CD8-positive, alpha-beta T cell (primary cell): ENCODE measurements at regions of chr10 and their contacts with region 1.

Region 1: GRCh38 chr10:32190890-32191491 is 134.8 kb upstream of the KIF5B start:
- DNase-seq: peak in 2 of 9 experiments; percentile 52 to 65
- ATAC-seq: peak; percentile 51
- H3K4me3 ChIP-seq: no peak overlapping the region
- H3K4me3 Mint-ChIP-seq: no peak overlapping the region
- H3K27ac ChIP-seq: no peak overlapping the region
- H3K27ac Mint-ChIP-seq: no peak overlapping the region
- H3K4me1 ChIP-seq: no peaks in the 10 kb centered on the region
- H3K4me1 Mint-ChIP-seq: peaks cover 2% of the 10 kb centered on the region
- H3K27me3 ChIP-seq: no peaks in the 10 kb centered on the region
- H3K27me3 Mint-ChIP-seq: no peaks in the 10 kb centered on the region
- CTCF ChIP-seq: peak; percentile 92

Region 2: GRCh38 chr10:31947144-31947926 is 243.7 kb before region 1 on chr10:
- CTCF ChIA-PET with region 1: no interaction called
- POLR2A ChIA-PET with region 1: no interaction called
- intact Hi-C with region 1: no loop called
- DNase-seq: no peak
- ATAC-seq: no peak
- H3K4me3 ChIP-seq: no peak overlapping the region
- H3K4me3 Mint-ChIP-seq: no peak overlapping the region
- H3K27ac ChIP-seq: no peak overlapping the region
- H3K27ac Mint-ChIP-seq: no peak overlapping the region
- H3K4me1 ChIP-seq: no peaks in the 10 kb centered on the region
- H3K4me1 Mint-ChIP-seq: peaks cover 7% of the 10 kb centered on the region
- H3K27me3 ChIP-seq: no peaks in the 10 kb centered on the region
- H3K27me3 Mint-ChIP-seq: no peaks in the 10 kb centered on the region
- CTCF ChIP-seq: no peak

Region 3: GRCh38 chr10:32207544-32207943 is 16.6 kb after region 1 on chr10:
- CTCF ChIA-PET with region 1: interaction called, 6 read pairs
- POLR2A ChIA-PET with region 1: no interaction called
- intact Hi-C with region 1: loop called in 1 of 2 experiments (anchors 1 kb)
- DNase-seq: peak; percentile 21 to 66 (median 54)
- ATAC-seq: peak; percentile 65
- H3K4me3 ChIP-seq: no peak overlapping the region
- H3K4me3 Mint-ChIP-seq: no peak overlapping the region
- H3K27ac ChIP-seq: no peak overlapping the region
- H3K27ac Mint-ChIP-seq: no peak overlapping the region
- H3K4me1 ChIP-seq: no peaks in the 10 kb centered on the region
- H3K4me1 Mint-ChIP-seq: no peaks in the 10 kb centered on the region
- H3K27me3 ChIP-seq: no peaks in the 10 kb centered on the region
- H3K27me3 Mint-ChIP-seq: no peaks in the 10 kb centered on the region
- CTCF ChIP-seq: peak; percentile 50

Region 4: GRCh38 chr10:32256613-32257437 is 65.8 kb after region 1 on chr10:
- CTCF ChIA-PET with region 1: interaction called, 3 read pairs
- POLR2A ChIA-PET with region 1: no interaction called
- intact Hi-C with region 1: loop called in 1 of 2 experiments (anchors 5 kb)
- DNase-seq: peak; percentile 43 to 81 (median 67)
- ATAC-seq: peak; percentile 73
- H3K4me3 ChIP-seq: no peak overlapping the region
- H3K4me3 Mint-ChIP-seq: no peak overlapping the region
- H3K27ac ChIP-seq: no peak overlapping the region
- H3K27ac Mint-ChIP-seq: no peak overlapping the region
- H3K4me1 ChIP-seq: no peaks in the 10 kb centered on the region
- H3K4me1 Mint-ChIP-seq: peaks cover 5% of the 10 kb centered on the region
- H3K27me3 ChIP-seq: no peaks in the 10 kb centered on the region
- H3K27me3 Mint-ChIP-seq: no peaks in the 10 kb centered on the region
- CTCF ChIP-seq: peak; percentile 89

Region 5: DNA sequence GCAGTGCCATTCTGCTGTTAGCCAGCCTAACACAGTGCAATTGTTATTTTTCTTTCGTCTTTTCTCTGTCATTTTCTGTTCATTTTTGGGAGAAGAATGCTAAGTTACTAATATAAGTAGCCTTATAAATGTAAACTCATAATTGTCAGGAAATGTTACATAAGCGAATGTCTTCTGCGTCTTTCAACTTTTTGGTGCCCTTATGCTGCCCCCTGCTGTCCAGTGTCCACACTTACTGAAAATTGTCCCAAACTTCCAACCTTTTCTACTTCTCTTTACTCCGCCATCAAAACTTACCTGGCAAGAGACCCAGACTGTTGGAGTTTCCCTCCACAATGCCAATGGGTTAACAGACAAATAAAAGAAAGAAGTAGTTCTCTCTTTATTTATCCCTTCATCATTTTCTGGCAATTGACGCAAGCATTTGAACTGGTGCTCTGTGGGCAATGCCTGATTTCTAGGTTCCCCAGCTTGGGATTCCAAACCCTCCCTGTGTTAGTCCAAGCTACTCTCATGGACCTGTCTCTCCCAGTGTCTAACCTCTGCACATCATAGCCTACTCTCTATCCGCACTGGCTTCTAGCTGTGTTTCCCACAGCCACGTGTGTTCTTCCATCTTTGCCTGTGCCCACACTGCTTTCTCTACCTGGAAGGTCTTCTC is 176.9 kb after region 1 on chr10:
- CTCF ChIA-PET with region 1: interaction called, 8 read pairs
- POLR2A ChIA-PET with region 1: no interaction called
- intact Hi-C with region 1: loop called (anchors 1 to 2 kb)
- DNase-seq: peak; percentile 49 to 87 (median 78)
- ATAC-seq: peak; percentile 73
- H3K4me3 ChIP-seq: no peak overlapping the region
- H3K4me3 Mint-ChIP-seq: peak overlapping the region; percentile 23
- H3K27ac ChIP-seq: no peak overlapping the region
- H3K27ac Mint-ChIP-seq: peak overlapping the region; percentile 78
- H3K4me1 ChIP-seq: peaks cover 38% of the 10 kb centered on the region
- H3K4me1 Mint-ChIP-seq: peaks cover 65% of the 10 kb centered on the region
- H3K27me3 ChIP-seq: no peaks in the 10 kb centered on the region
- H3K27me3 Mint-ChIP-seq: no peaks in the 10 kb centered on the region
- CTCF ChIP-seq: peak; percentile 86

Region 6: DNA sequence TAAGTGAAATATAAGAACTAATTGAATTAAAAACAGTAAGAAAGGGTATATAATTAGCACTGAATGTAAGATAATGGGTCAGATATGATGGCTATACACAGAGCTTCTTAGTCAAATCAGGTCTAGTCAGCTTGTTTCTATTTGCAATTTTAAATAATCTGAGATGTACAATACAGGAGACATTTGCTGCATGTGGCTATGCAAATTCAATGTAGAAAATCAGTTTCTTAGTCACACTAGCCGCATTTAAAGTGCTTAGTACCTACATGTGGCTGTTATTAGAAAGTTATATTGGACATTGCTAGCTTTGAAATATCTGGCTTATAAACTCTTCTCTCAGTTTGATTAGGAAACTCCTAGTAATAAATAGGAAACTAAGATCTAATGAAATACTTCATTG is 280.2 kb after region 1 on chr10:
- CTCF ChIA-PET with region 1: no interaction called
- POLR2A ChIA-PET with region 1: no interaction called
- intact Hi-C with region 1: no loop called
- DNase-seq: no peak
- ATAC-seq: no peak
- H3K4me3 ChIP-seq: no peak overlapping the region
- H3K4me3 Mint-ChIP-seq: no peak overlapping the region
- H3K27ac ChIP-seq: no peak overlapping the region
- H3K27ac Mint-ChIP-seq: no peak overlapping the region
- H3K4me1 ChIP-seq: no peaks in the 10 kb centered on the region
- H3K4me1 Mint-ChIP-seq: peaks cover 9% of the 10 kb centered on the region
- H3K27me3 ChIP-seq: no peaks in the 10 kb centered on the region
- H3K27me3 Mint-ChIP-seq: no peaks in the 10 kb centered on the region
- CTCF ChIP-seq: no peak

Region 7: DNA sequence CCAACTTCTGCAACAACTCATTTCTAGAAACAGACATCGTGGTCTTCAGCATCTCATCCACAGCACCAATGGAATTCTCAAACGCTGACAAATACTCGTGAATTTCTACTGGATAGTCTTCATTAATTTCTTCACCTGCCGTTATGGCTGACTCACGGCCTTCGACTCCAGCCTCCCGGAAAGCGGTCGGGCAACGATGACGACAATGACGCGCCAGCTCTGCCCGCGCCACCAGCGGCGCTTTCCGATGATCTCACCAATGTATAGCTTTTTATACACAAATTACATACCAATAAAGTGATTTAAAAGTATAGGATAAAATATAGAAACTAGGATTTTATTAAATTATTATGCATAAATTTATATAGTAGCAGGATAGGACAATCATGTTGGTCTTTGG is 320.6 kb after region 1 on chr10:
- CTCF ChIA-PET with region 1: no interaction called
- POLR2A ChIA-PET with region 1: no interaction called
- intact Hi-C with region 1: no loop called
- DNase-seq: no peak
- ATAC-seq: no peak
- H3K4me3 ChIP-seq: no peak overlapping the region
- H3K4me3 Mint-ChIP-seq: no peak overlapping the region
- H3K27ac ChIP-seq: no peak overlapping the region
- H3K27ac Mint-ChIP-seq: no peak overlapping the region
- H3K4me1 ChIP-seq: no peaks in the 10 kb centered on the region
- H3K4me1 Mint-ChIP-seq: no peaks in the 10 kb centered on the region
- H3K27me3 ChIP-seq: no peaks in the 10 kb centered on the region
- H3K27me3 Mint-ChIP-seq: no peaks in the 10 kb centered on the region
- CTCF ChIP-seq: no peak